ENCODE measurements at regions of chr1 and their contacts with region 1.

Region 1: DNA sequence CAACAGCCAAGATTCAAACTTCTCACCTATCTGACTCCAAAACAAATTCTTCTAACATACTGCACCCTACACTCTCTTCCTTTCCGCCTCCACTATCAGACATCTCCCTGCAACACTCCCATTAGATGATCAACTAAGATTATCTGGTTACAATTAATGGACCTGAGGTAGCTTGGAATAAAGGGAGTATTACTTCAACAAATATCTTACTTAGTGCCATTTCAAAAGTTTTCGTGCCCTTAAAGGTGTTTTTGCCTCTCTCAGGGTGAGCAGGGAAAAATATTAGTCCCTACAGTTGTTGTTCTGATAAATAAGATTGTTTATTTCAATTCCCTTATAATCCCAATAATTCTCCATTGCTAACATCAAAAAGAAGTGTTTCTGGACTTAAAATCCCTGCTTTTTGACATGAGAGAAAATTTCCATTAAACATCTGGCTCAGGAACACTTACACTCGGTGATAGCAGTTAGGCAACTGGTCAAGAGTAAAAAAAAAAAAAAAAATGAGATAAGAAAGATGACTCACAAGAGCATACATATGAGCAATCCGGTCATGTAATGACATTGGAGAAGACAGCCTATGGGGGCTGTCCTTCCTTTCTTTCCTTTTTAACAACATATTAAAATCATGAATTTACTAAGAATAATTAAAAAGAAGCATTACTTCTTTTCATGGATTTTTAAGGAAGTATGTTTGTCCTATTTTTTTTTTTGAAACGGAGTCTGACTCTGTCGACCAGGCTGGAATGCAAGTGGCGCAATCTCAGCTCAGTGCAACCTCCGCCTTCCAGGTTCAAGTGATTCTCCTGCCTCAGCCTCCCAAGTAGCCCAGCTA is 7.6 kb downstream of the RSBN1 start:
- DNase-seq: peak in 1 of 2 experiments; percentile 17
- H3K4me3 ChIP-seq: no peak overlapping the region
- H3K4me3 Mint-ChIP-seq: peak overlapping the region; percentile 33
- H3K27ac Mint-ChIP-seq: peak overlapping the region; percentile 43
- H3K4me1 ChIP-seq: peaks cover 18% of the 10 kb centered on the region
- H3K4me1 Mint-ChIP-seq: no peaks in the 10 kb centered on the region
- H3K27me3 ChIP-seq: no peaks in the 10 kb centered on the region
- H3K27me3 Mint-ChIP-seq: no peaks in the 10 kb centered on the region
- CTCF ChIP-seq: no peak

Region 2: DNA sequence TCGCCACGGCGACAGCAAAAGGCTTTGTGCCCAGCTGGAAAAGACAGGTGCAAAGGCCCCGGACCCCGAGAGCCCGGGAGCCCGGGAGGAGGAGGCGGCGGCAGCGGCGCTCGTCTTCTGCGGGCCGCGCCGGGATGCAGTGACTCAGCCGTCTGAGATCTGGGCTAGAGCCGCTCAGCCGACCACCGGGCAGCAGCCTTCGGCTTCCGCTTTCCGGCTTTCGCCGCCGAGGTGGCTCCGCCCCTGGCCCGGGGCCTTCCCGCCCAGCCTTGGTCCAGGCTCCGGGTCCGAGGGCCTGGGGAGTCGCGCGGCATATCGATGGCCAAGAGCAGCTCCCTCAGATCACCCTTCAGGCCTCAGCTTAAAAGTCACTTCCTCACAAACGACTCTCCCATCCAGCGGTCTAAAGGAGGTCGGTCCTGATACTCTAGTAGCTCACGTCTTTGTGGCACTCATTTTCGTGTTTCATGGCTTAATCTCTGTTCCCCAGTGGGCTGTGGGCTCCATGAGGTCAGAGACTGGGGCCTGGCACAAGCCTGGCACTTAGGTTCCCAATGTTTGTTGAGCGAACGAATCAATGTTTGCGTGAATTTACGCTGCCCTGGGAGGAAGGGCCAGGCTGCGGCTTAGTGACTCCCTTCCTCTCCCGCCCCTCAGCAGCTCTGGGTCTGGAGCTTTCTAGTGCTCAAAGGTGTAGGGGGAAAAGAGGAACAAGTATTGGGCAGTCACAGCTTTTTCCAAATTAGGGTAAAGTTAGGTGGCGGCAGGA is 45.1 kb before region 1 on chr1 and contains the start of gene PHTF1:
- CTCF ChIA-PET with region 1: no interaction called
- POLR2A ChIA-PET with region 1: no interaction called
- intact Hi-C with region 1: loop called (anchors 5 kb)
- DNase-seq: peak; percentile 59 to 75
- H3K4me3 ChIP-seq: peak within 1 kb of the TSS; percentile 65
- H3K4me3 Mint-ChIP-seq: peak within 1 kb of the TSS; percentile 77
- H3K27ac Mint-ChIP-seq: peak within 1 kb of the TSS; percentile 75
- H3K4me1 ChIP-seq: no peaks in the 10 kb centered on the region; the same call in 1 of the 2 replicates
- H3K4me1 Mint-ChIP-seq: no peaks in the 10 kb centered on the region
- H3K27me3 ChIP-seq: no peaks in the 10 kb centered on the region
- H3K27me3 Mint-ChIP-seq: no peaks in the 10 kb centered on the region
- CTCF ChIP-seq: no peak
- total RNA-seq, gene PHTF1: 10.4 and 12.7 TPM in 2 replicates

Region 3: GRCh38 chr1:114458237-114458777 is 653.7 kb after region 1 on chr1:
- CTCF ChIA-PET with region 1: no interaction called
- POLR2A ChIA-PET with region 1: no interaction called
- intact Hi-C with region 1: no loop called
- DNase-seq: no peak
- H3K4me3 ChIP-seq: no peak overlapping the region
- H3K4me3 Mint-ChIP-seq: no peak overlapping the region
- H3K27ac Mint-ChIP-seq: peak overlapping the region; percentile 39
- H3K4me1 ChIP-seq: peaks cover 34% of the 10 kb centered on the region
- H3K4me1 Mint-ChIP-seq: peaks cover 14% of the 10 kb centered on the region
- H3K27me3 ChIP-seq: no peaks in the 10 kb centered on the region
- H3K27me3 Mint-ChIP-seq: no peaks in the 10 kb centered on the region
- CTCF ChIP-seq: no peak

Measured in Caco-2 (cell line).